ENCODE measurements at regions of chr2 and their contacts with region 1.

Region 1: GRCh38 chr2:84846041-84846663 is 34.7 kb downstream of the TRABD2A start:
- DNase-seq: peak; percentile 72
- ATAC-seq: peak; percentile 75
- H3K4me3 Mint-ChIP-seq: peak overlapping the region; percentile 38
- H3K27ac Mint-ChIP-seq: peak overlapping the region; percentile 96
- H3K4me1 Mint-ChIP-seq: peaks cover 92% of the 10 kb centered on the region
- H3K27me3 Mint-ChIP-seq: no peaks in the 10 kb centered on the region

Region 2: GRCh38 chr2:84781942-84782716 is 64.0 kb before region 1 on chr2:
- CTCF ChIA-PET with region 1: interaction called, 17 read pairs
- POLR2A ChIA-PET with region 1: interaction called, 7 read pairs
- DNase-seq: peak; percentile 77
- ATAC-seq: peak; percentile 93
- H3K4me3 Mint-ChIP-seq: peak overlapping the region; percentile 66
- H3K27ac Mint-ChIP-seq: peak overlapping the region; percentile 95
- H3K4me1 Mint-ChIP-seq: peaks cover 68% of the 10 kb centered on the region
- H3K27me3 Mint-ChIP-seq: no peaks in the 10 kb centered on the region

Region 3: DNA sequence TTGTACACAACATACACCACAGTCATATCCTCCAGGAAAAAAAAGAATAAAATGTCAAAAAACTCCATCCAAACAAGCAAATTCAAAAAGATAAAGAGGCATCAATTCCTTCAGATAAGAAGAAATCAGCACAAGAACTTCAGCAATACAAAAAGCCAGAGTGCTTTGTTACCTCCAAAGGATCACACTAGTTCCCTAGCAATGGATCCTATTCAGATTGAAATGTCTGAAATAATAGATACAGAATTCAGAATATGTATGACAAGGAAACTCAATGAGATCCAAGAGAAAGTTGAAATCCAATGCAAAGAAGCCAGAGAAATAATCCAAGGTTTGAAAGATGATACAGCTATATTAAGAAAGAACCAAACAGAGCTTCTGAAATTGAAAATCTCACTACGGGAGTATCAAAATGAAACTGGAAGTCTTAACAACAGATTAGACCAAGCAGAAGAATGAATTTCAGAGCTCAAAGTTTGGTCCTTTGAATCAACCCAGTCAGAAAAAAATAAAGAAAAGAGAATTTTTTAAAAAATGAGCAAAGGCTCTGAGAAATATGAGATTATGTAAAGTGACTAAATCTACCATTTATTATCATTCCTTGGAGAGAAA is 45.9 kb before region 1 on chr2:
- CTCF ChIA-PET with region 1: no interaction called
- POLR2A ChIA-PET with region 1: no interaction called
- DNase-seq: no peak
- ATAC-seq: no peak
- H3K4me3 Mint-ChIP-seq: peak overlapping the region; percentile 26
- H3K27ac Mint-ChIP-seq: peak overlapping the region; percentile 5
- H3K4me1 Mint-ChIP-seq: peaks cover 13% of the 10 kb centered on the region
- H3K27me3 Mint-ChIP-seq: no peaks in the 10 kb centered on the region

Region 4: DNA sequence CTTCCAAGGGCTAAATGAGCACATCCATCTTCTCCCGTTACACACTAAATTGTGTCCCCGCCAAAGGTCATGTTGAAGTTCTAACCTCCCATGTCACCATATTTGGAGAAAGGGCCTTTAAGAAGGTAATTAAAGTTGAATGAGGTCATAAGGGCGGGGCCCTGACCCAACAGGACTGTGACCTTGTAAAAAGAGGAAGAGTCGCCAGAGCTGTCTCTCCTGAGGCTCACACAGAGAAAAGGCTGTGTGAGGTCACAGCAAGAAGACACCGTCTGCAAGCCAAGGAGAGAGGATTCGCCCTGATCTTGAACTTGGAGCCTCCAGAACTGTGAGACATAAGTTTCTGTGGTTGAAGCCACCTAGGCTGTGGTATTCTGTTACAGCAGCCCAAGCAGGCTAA is 10.6 kb after region 1 on chr2:
- CTCF ChIA-PET with region 1: interaction called, 18 read pairs
- POLR2A ChIA-PET with region 1: interaction called, 13 read pairs
- DNase-seq: peak; percentile 75
- ATAC-seq: peak; percentile 80
- H3K4me3 Mint-ChIP-seq: peak overlapping the region; percentile 40
- H3K27ac Mint-ChIP-seq: peak overlapping the region; percentile 87
- H3K4me1 Mint-ChIP-seq: peaks cover 92% of the 10 kb centered on the region
- H3K27me3 Mint-ChIP-seq: no peaks in the 10 kb centered on the region

Region 5: GRCh38 chr2:84865181-84865783 is 19.1 kb after region 1 on chr2:
- CTCF ChIA-PET with region 1: interaction called, 18 read pairs
- POLR2A ChIA-PET with region 1: interaction called, 4 read pairs
- DNase-seq: peak; percentile 27
- ATAC-seq: peak; percentile 61
- H3K4me3 Mint-ChIP-seq: no peak overlapping the region
- H3K27ac Mint-ChIP-seq: peak overlapping the region; percentile 75
- H3K4me1 Mint-ChIP-seq: peaks cover 82% of the 10 kb centered on the region
- H3K27me3 Mint-ChIP-seq: no peaks in the 10 kb centered on the region

Region 6: DNA sequence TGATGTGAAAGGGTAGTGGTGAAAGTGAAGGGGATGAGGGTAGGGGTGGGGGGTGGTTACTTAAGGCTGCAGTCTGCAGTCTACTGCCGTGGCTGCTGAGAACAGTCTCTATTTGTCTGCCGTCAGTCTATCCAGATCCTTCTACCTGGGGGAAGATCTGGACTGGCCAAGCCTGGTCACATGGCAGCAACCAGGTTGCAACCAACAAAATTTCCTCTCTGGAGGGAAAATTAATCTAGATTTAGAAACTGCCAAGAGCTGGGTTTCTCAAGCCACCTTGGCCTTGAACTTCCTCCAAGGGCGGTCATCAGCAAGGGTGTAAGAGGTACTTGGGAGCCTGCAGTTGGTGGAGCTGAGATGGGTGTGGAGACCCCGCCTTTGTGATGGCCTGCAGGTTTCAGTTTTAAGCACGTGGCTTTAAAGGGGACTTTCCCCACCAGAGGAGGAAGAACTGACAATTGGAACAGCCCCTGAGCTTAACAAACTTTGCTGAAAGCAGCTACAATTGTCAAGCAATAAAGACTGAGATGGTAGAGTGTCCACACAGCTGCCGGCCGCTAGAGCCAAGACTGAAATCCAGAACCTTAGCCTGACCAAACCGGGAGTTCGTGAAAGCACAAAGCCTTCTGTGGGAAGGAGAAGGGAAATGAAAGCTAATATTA is 93.4 kb after region 1 on chr2:
- CTCF ChIA-PET with region 1: no interaction called
- POLR2A ChIA-PET with region 1: no interaction called
- DNase-seq: peak; percentile 93
- ATAC-seq: peak; percentile 89
- H3K4me3 Mint-ChIP-seq: peak overlapping the region; percentile 69
- H3K27ac Mint-ChIP-seq: peak overlapping the region; percentile 96
- H3K4me1 Mint-ChIP-seq: peaks cover 65% of the 10 kb centered on the region
- H3K27me3 Mint-ChIP-seq: no peaks in the 10 kb centered on the region

Measured in activated CD8-positive, alpha-beta T cell treated with anti-CD3 and anti-CD28 coated beads, Interleukin-2, amount 10 ng/mL, durations not matched to agents 7 days and 5 days (primary cell).